CD4-positive, alpha-beta T cell (primary cell): ENCODE measurements at regions of chr3 and their contacts with region 1.

Region 1: DNA sequence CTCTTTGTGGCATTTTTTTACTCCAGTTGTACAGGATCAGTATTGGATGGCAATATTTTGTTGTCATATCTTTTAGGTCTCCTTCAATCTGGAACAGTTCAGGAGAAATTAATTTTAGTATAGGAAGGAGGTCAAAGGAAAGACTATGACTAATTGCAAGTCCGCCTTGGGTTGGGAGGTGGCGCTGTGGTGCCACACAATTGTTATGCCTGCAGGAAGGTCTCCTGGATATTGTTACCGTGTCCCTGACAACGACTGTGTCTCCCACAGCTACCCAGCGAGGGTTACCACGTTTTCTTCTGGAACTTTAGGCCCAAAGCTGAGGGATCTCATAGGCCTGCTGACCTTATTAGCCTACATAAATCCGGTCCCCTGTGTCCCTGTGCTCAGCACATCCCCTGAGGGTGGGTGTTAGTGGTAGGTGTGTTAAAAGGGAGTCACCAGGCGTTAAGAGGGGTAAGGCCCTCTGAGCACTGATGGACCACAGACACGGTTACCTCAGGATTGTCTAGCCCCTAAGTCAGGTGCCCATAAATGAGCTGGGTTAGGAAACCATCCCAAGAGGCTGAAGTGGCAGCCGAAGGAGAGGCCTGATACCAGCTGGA is 31.5 kb downstream of the KCNAB1 start:
- DNase-seq: peak; percentile 30 to 72 (median 44)
- ATAC-seq: peak; percentile 66
- H3K4me3 ChIP-seq: no peak overlapping the region
- H3K4me3 Mint-ChIP-seq: no peak overlapping the region
- H3K27ac ChIP-seq: no peak overlapping the region
- H3K27ac Mint-ChIP-seq: no peak overlapping the region
- H3K4me1 ChIP-seq: no peaks in the 10 kb centered on the region
- H3K4me1 Mint-ChIP-seq: no peaks in the 10 kb centered on the region
- H3K27me3 ChIP-seq: no peaks in the 10 kb centered on the region
- H3K27me3 Mint-ChIP-seq: no peaks in the 10 kb centered on the region
- CTCF ChIP-seq: peak; percentile 83

Region 2: DNA sequence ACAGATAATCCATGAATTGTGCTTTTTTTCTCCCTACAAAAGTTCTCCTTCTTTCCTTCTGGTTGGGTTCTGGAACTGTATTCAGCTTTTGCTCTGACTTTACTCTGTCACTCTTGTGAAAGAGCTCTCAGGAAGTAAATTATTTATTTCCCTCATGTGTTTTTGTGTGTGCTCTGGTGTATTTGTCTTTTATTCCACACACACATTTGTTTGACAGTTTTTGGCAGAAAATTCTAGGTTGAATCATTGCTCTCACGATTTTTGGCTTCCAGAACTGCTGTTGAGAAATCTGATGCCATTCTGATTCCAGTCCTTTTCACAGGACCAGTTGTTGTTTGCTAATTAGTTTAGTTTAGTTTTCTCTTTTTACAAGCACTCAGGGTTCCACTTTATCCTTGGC is 579.8 kb before region 1 on chr3:
- CTCF ChIA-PET with region 1: no interaction called
- POLR2A ChIA-PET with region 1: no interaction called
- intact Hi-C with region 1: no loop called
- DNase-seq: no peak
- ATAC-seq: no peak
- H3K4me3 ChIP-seq: no peak overlapping the region
- H3K4me3 Mint-ChIP-seq: no peak overlapping the region
- H3K27ac ChIP-seq: no peak overlapping the region
- H3K27ac Mint-ChIP-seq: no peak overlapping the region
- H3K4me1 ChIP-seq: no peaks in the 10 kb centered on the region
- H3K4me1 Mint-ChIP-seq: no peaks in the 10 kb centered on the region
- H3K27me3 ChIP-seq: no peaks in the 10 kb centered on the region
- H3K27me3 Mint-ChIP-seq: peaks cover 4% of the 10 kb centered on the region
- CTCF ChIP-seq: no peak

Region 3: GRCh38 chr3:155690921-155691320 is 461.0 kb before region 1 on chr3:
- CTCF ChIA-PET with region 1: no interaction called
- POLR2A ChIA-PET with region 1: no interaction called
- intact Hi-C with region 1: no loop called
- DNase-seq: no peak
- ATAC-seq: no peak
- H3K4me3 ChIP-seq: no peak overlapping the region
- H3K4me3 Mint-ChIP-seq: no peak overlapping the region
- H3K27ac ChIP-seq: no peak overlapping the region
- H3K27ac Mint-ChIP-seq: no peak overlapping the region
- H3K4me1 ChIP-seq: no peaks in the 10 kb centered on the region
- H3K4me1 Mint-ChIP-seq: no peaks in the 10 kb centered on the region
- H3K27me3 ChIP-seq: no peaks in the 10 kb centered on the region
- H3K27me3 Mint-ChIP-seq: peaks cover 4% of the 10 kb centered on the region
- CTCF ChIP-seq: no peak

Region 4: GRCh38 chr3:156509189-156510174 is 357.6 kb after region 1 on chr3:
- CTCF ChIA-PET with region 1: interaction called, 5 read pairs
- POLR2A ChIA-PET with region 1: interaction called, 3 read pairs
- intact Hi-C with region 1: loop called (anchors 1 kb)
- DNase-seq: peak in 3 of 14 experiments; percentile 70 to 73 (median 72)
- ATAC-seq: peak; percentile 94
- H3K4me3 ChIP-seq: no peak overlapping the region
- H3K4me3 Mint-ChIP-seq: no peak overlapping the region
- H3K27ac ChIP-seq: no peak overlapping the region
- H3K27ac Mint-ChIP-seq: no peak overlapping the region
- H3K4me1 ChIP-seq: no peaks in the 10 kb centered on the region
- H3K4me1 Mint-ChIP-seq: no peaks in the 10 kb centered on the region
- H3K27me3 ChIP-seq: no peaks in the 10 kb centered on the region
- H3K27me3 Mint-ChIP-seq: peaks cover 22% of the 10 kb centered on the region
- CTCF ChIP-seq: peak; percentile 69

Region 5: GRCh38 chr3:157081681-157082210 is 929.8 kb after region 1 on chr3:
- CTCF ChIA-PET with region 1: interaction called, 3 read pairs
- POLR2A ChIA-PET with region 1: no interaction called
- intact Hi-C with region 1: loop called (anchors 2 kb)
- DNase-seq: peak; percentile 76 to 93 (median 81)
- ATAC-seq: peak; percentile 93
- H3K4me3 ChIP-seq: no peak overlapping the region
- H3K4me3 Mint-ChIP-seq: no peak overlapping the region
- H3K27ac ChIP-seq: peak overlapping the region in 1 of 2 donors; percentile 25
- H3K27ac Mint-ChIP-seq: peak overlapping the region; percentile 64
- H3K4me1 ChIP-seq: peaks cover 14% of the 10 kb centered on the region
- H3K4me1 Mint-ChIP-seq: peaks cover 17% of the 10 kb centered on the region
- H3K27me3 ChIP-seq: no peaks in the 10 kb centered on the region
- H3K27me3 Mint-ChIP-seq: no peaks in the 10 kb centered on the region
- CTCF ChIP-seq: peak; percentile 98

Region 6: GRCh38 chr3:157136647-157137387 is 984.9 kb after region 1 on chr3:
- CTCF ChIA-PET with region 1: interaction called, 7 read pairs
- POLR2A ChIA-PET with region 1: no interaction called
- intact Hi-C with region 1: loop called (anchors 1 to 2 kb)
- DNase-seq: no peak
- ATAC-seq: peak; percentile 27
- H3K4me3 ChIP-seq: no peak overlapping the region
- H3K4me3 Mint-ChIP-seq: no peak overlapping the region
- H3K27ac ChIP-seq: no peak overlapping the region
- H3K27ac Mint-ChIP-seq: peak overlapping the region; percentile 74
- H3K4me1 ChIP-seq: peaks cover 47% of the 10 kb centered on the region
- H3K4me1 Mint-ChIP-seq: peaks cover 29% of the 10 kb centered on the region
- H3K27me3 ChIP-seq: no peaks in the 10 kb centered on the region
- H3K27me3 Mint-ChIP-seq: no peaks in the 10 kb centered on the region
- CTCF ChIP-seq: no peak

Region 7: DNA sequence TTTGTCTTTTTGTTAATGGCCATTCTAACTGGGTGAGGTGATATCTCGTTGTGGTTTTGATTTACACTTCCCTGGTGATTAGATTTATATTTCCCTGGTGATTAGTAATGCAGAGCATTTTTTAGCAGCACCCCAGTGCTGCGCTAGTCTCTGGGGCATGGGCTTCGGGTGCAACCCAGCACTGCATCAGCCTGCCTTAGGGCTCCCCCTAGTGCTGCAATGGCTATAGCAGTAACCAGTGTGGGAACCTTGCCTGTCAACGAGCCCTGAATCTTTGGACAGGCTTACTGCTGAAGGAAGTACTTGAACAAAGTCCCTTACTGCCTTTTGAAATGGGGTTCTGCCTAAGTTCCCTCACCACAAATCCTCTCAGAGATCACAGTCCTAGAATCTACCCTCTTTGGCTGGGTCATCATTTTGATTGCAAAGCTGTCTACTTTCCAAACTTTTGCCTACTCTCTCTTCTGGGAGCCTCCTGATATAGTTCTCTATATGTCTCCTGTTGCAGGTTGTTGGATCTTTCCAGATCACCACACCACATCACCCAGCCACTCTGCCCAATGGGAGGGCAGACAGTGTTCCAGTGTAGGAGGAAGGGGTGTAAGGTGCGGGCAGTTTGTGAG is 1087.3 kb after region 1 on chr3:
- CTCF ChIA-PET with region 1: no interaction called
- POLR2A ChIA-PET with region 1: no interaction called
- intact Hi-C with region 1: loop called in 1 of 2 experiments (anchors 2 kb)
- DNase-seq: peak; percentile 54 to 82 (median 61)
- ATAC-seq: peak; percentile 99
- H3K4me3 ChIP-seq: no peak overlapping the region
- H3K4me3 Mint-ChIP-seq: no peak overlapping the region
- H3K27ac ChIP-seq: no peak overlapping the region
- H3K27ac Mint-ChIP-seq: no peak overlapping the region
- H3K4me1 ChIP-seq: no peaks in the 10 kb centered on the region
- H3K4me1 Mint-ChIP-seq: no peaks in the 10 kb centered on the region
- H3K27me3 ChIP-seq: no peaks in the 10 kb centered on the region
- H3K27me3 Mint-ChIP-seq: no peaks in the 10 kb centered on the region
- CTCF ChIP-seq: peak; percentile 85